CD4-positive, alpha-beta T cell (primary cell): ENCODE measurements at regions of chr2 and their contacts with region 1.

Region 1: GRCh38 chr2:200471324-200471848 is 38.5 kb downstream of the KCTD18 start:
- DNase-seq: peak in 9 of 14 experiments; percentile 8 to 72 (median 33)
- ATAC-seq: no peak
- H3K4me3 ChIP-seq: no peak overlapping the region
- H3K4me3 Mint-ChIP-seq: peak overlapping the region; percentile 70
- H3K27ac ChIP-seq: no peak overlapping the region
- H3K27ac Mint-ChIP-seq: peak overlapping the region; percentile 3
- H3K4me1 ChIP-seq: peaks cover 29% of the 10 kb centered on the region
- H3K4me1 Mint-ChIP-seq: peaks cover 35% of the 10 kb centered on the region
- H3K27me3 ChIP-seq: no peaks in the 10 kb centered on the region
- H3K27me3 Mint-ChIP-seq: no peaks in the 10 kb centered on the region
- CTCF ChIP-seq: peak; percentile 71

Region 2: GRCh38 chr2:199704358-199705238 is 766.8 kb before region 1 on chr2:
- CTCF ChIA-PET with region 1: no interaction called
- POLR2A ChIA-PET with region 1: no interaction called
- intact Hi-C with region 1: loop called in 1 of 2 experiments (anchors 10 kb)
- DNase-seq: peak in 3 of 14 experiments; percentile 30 to 49 (median 49)
- ATAC-seq: no peak
- H3K4me3 ChIP-seq: no peak overlapping the region
- H3K4me3 Mint-ChIP-seq: no peak overlapping the region
- H3K27ac ChIP-seq: no peak overlapping the region
- H3K27ac Mint-ChIP-seq: no peak overlapping the region
- H3K4me1 ChIP-seq: no peaks in the 10 kb centered on the region
- H3K4me1 Mint-ChIP-seq: no peaks in the 10 kb centered on the region
- H3K27me3 ChIP-seq: no peaks in the 10 kb centered on the region
- H3K27me3 Mint-ChIP-seq: no peaks in the 10 kb centered on the region
- CTCF ChIP-seq: peak; percentile 11

Region 3: DNA sequence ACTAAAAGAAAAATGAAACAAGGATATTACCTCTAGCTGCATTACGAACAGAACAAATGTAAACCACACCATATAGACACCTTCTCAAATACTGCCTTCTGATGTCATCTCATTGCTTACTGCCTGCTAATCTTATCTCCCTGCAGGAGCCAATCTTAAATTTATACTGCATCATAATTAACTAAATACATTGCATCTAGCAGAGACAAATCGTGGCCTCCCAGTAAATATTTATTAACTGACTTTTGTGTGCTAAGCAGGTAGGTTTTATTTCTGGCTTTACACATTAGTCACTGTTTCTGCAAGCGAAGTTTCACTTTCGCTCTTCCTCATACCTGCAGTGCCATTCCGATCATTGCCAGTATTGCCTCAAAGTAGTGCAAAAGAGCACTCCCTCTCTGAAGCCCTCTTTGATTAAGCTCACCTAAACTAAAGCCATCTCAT is 97.4 kb before region 1 on chr2:
- CTCF ChIA-PET with region 1: no interaction called
- POLR2A ChIA-PET with region 1: interaction called, 15 read pairs
- intact Hi-C with region 1: loop called in 1 of 2 experiments (anchors 10 kb)
- DNase-seq: peak in 6 of 14 experiments; percentile 7 to 81 (median 64)
- ATAC-seq: peak; percentile 90
- H3K4me3 ChIP-seq: peak overlapping the region; percentile 52
- H3K4me3 Mint-ChIP-seq: peak overlapping the region; percentile 88
- H3K27ac ChIP-seq: peak overlapping the region; percentile 36 to 56
- H3K27ac Mint-ChIP-seq: peak overlapping the region; percentile 88
- H3K4me1 ChIP-seq: peaks cover 28% of the 10 kb centered on the region
- H3K4me1 Mint-ChIP-seq: peaks cover 58% of the 10 kb centered on the region
- H3K27me3 ChIP-seq: no peaks in the 10 kb centered on the region
- H3K27me3 Mint-ChIP-seq: no peaks in the 10 kb centered on the region
- CTCF ChIP-seq: no peak

Region 4: GRCh38 chr2:200625958-200626363 is 154.6 kb after region 1 on chr2:
- CTCF ChIA-PET with region 1: no interaction called
- POLR2A ChIA-PET with region 1: no interaction called
- intact Hi-C with region 1: no loop called
- DNase-seq: no peak
- ATAC-seq: no peak
- H3K4me3 ChIP-seq: no peak overlapping the region
- H3K4me3 Mint-ChIP-seq: no peak overlapping the region
- H3K27ac ChIP-seq: no peak overlapping the region
- H3K27ac Mint-ChIP-seq: no peak overlapping the region
- H3K4me1 ChIP-seq: no peaks in the 10 kb centered on the region
- H3K4me1 Mint-ChIP-seq: no peaks in the 10 kb centered on the region
- H3K27me3 ChIP-seq: peaks cover 2 to 3% of the 10 kb centered on the region in 2 experiments
- H3K27me3 Mint-ChIP-seq: peaks cover 22% of the 10 kb centered on the region
- CTCF ChIP-seq: no peak